AG04449 (cell line): ENCODE measurements at regions of chr14 and their contacts with region 1.

Region 1: DNA sequence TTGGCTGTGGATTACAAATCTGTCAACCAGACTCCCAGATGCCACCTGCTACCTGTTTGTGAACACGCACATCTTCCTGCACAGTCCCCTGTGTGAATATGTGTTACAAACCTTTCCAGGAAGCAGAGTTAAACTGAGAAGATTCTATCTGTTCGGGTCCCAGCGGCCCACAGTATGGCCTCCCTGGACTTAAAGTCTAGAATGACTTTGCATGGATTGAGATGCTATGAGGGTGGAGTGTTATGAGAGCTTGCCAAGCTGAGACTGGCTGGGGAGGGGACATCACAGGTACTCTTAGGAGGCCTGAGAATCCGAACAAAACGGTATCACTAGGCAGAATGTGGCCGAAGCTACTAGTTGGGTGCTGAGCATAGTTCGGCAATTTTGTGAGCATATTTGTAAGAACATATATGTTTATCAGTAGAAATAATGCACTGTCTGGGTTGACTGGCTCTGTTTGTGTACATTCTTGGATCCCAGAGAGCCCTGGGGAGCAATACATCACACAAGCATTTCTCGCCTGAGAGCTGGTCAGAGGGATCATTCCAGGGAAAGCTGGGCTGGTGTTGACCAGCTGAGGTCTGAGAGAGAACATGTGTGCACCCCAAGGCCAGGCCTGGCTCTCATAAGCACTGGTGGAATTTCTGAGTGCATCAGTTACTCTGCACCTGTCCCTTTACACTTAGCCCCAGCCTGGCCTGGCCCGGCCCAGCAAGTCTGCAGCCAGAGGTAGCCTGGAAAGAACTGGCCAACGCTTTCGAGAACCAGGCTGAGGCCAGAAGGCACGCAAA is 29.8 kb upstream of the LTBP2 start:
- DNase-seq: no peak
- H3K4me3 ChIP-seq: no peak overlapping the region
- CTCF ChIP-seq: no peak

Region 2: DNA sequence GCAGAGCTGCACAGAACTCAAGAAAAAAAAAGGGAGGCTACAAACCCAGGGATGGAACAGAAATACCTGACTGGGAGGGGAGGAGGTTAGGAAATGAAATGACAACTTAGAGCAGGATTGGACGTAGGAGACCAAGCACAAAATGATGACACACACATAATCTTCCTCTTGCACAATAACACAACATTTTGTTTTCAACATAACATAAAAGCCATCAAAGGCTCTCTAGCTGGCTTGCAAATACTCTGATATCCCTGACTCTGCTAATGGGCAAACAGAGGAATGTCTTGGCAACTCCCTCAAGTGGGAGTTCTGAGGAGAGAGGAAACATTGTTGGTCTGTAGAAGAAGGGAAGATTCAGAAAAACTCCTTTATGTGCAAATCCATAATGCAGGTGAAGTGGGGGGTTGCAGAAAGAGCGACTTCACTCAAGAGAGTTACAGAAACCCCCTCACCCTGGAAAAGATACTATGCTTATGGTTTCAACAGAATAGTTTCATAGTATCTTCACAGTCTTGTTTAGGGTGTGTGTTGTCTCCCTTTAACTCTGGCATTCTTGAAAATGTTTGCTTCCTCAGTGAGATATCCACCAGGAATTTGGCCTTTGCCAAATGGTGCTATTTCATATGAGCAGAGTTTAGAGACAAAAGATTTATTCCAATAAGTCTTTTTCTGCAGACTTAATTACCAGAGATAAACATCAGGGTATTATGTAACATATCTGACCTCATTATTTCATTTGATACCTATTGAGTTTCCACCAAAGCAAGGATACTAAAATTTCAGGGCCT is 14.0 kb after region 1 on chr14:
- CTCF ChIA-PET with region 1: interaction called, 26 read pairs
- POLR2A ChIA-PET with region 1: interaction called, 3 read pairs
- DNase-seq: peak; percentile 59
- H3K4me3 ChIP-seq: no peak overlapping the region
- CTCF ChIP-seq: no peak

Region 3: GRCh38 chr14:74667758-74668157 is 26.0 kb after region 1 on chr14:
- CTCF ChIA-PET with region 1: no interaction called
- POLR2A ChIA-PET with region 1: no interaction called
- DNase-seq: no peak
- H3K4me3 ChIP-seq: no peak overlapping the region
- CTCF ChIP-seq: no peak